ENCODE measurements at regions of chr5 and their contacts with region 1.

Region 1: DNA sequence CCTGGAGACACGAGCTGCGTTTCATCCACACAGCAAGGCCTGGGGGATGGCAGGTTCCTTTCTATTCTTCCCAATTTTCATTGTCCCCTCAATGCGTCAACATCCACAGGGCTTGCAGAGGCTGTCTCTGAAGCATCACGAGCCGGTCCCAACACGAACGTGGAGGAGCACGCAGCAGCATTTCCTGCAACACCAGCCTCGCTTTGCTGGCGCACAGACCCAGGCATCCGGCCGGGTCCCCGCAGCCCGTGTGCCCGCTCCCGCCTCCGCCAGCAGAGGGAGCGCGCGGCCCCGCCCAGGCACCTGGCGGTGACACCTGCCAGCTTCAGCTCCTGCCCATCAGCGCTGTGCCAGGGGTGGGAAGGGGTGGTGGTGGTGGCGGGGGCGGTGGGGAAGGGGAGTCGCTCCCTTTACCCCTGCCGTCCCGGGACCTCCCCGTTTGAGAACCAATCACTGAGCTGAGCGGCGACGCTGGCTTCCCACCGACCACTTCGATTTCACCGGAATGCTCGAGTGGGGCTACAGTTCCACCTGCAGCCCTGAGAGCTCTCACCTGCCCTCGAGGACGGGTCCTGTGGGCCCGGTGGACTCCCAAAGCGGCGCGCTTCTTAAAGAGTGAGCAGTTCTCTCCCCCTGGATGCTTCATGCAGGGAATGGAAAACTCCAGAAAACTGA is 464.5 kb downstream of the ICE1 start:
- DNase-seq: peak; percentile 51
- ATAC-seq: peak; percentile 87
- H3K4me3 Mint-ChIP-seq: peak overlapping the region; percentile 62
- H3K27ac Mint-ChIP-seq: no peak overlapping the region
- H3K4me1 Mint-ChIP-seq: no peaks in the 10 kb centered on the region
- H3K27me3 Mint-ChIP-seq: peaks cover 2% of the 10 kb centered on the region
- CTCF ChIP-seq: no peak

Region 2: GRCh38 chr5:5638211-5638610 is 248.7 kb before region 1 on chr5:
- CTCF ChIA-PET with region 1: interaction called, 3 read pairs
- POLR2A ChIA-PET with region 1: no interaction called
- intact Hi-C with region 1: loop called (anchors 10 kb)
- DNase-seq: no peak
- ATAC-seq: no peak
- H3K4me3 Mint-ChIP-seq: no peak overlapping the region
- H3K27ac Mint-ChIP-seq: no peak overlapping the region
- H3K4me1 Mint-ChIP-seq: no peaks in the 10 kb centered on the region
- H3K27me3 Mint-ChIP-seq: peaks cover 2% of the 10 kb centered on the region
- CTCF ChIP-seq: no peak

Measured in activated B cell treated with CpG ODN at 0.5 μM for 24 hours (primary cell).